ENCODE measurements at regions of chr13 and their contacts with region 1.

Region 1: GRCh38 chr13:30196025-30196424 is 111.3 kb downstream of the KATNAL1 start:
- DNase-seq: no peak
- ATAC-seq: no peak
- H3K4me3 ChIP-seq: no peak overlapping the region
- H3K27ac ChIP-seq: no peak overlapping the region
- H3K4me1 ChIP-seq: peaks cover 34% of the 10 kb centered on the region
- H3K27me3 ChIP-seq: no peaks in the 10 kb centered on the region
- CTCF ChIP-seq: no peak
- EP300 ChIP-seq: no peak
- POLR2A ChIP-seq: no peak
- RAD21 ChIP-seq: no peak

Region 2: DNA sequence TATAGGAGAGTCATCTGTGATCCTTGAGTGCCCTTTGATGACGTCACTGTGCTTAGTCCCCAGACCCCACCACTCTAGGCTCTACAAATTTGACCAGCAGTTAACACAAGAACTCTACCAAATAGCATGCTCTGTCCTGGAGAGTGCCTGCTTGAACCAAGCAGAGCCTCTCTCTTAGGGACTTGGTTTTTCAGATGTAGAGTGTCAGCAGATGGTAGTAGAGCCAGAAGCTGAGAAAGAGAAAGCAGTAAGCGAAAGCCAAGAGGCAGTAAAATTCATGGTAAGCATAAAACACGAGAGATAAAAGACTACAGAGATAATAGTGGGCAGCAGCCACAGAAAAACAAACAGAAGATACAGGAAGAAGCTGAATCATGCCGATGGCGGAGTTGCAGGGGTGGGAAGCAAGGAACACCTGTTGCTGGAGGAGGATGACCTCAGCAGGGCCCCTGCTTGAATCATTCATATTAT is 793.8 kb before region 1 on chr13:
- CTCF ChIA-PET with region 1: no interaction called
- POLR2A ChIA-PET with region 1: no interaction called
- RAD21 ChIA-PET with region 1: no interaction called
- SMC1A ChIA-PET with region 1: no interaction called
- in situ Hi-C with region 1: no loop called
- intact Hi-C with region 1: no loop called
- DNase-seq: no peak
- ATAC-seq: no peak
- H3K4me3 ChIP-seq: no peak overlapping the region
- H3K27ac ChIP-seq: no peak overlapping the region
- H3K4me1 ChIP-seq: no peaks in the 10 kb centered on the region
- H3K27me3 ChIP-seq: no peaks in the 10 kb centered on the region
- CTCF ChIP-seq: no peak
- EP300 ChIP-seq: no peak
- POLR2A ChIP-seq: no peak
- RAD21 ChIP-seq: no peak

Region 3: GRCh38 chr13:30158774-30159445 is 37.1 kb before region 1 on chr13:
- CTCF ChIA-PET with region 1: no interaction called
- POLR2A ChIA-PET with region 1: interaction called, 8 read pairs
- RAD21 ChIA-PET with region 1: interaction called, 13 read pairs
- SMC1A ChIA-PET with region 1: interaction called, 11 read pairs
- in situ Hi-C with region 1: no loop called
- intact Hi-C with region 1: no loop called
- DNase-seq: no peak
- ATAC-seq: peak; percentile 61
- H3K4me3 ChIP-seq: no peak overlapping the region
- H3K27ac ChIP-seq: 0 out of 2 replicates have a peak overlapping the region, but pooled peaks have one; percentile 1
- H3K4me1 ChIP-seq: peaks cover 33% of the 10 kb centered on the region
- H3K27me3 ChIP-seq: no peaks in the 10 kb centered on the region
- CTCF ChIP-seq: peak in 2 of 3 experiments; percentile 33 to 40; a peak in 4 of 6 replicates
- EP300 ChIP-seq: no peak
- POLR2A ChIP-seq: no peak
- RAD21 ChIP-seq: peak; percentile 68

Region 4: DNA sequence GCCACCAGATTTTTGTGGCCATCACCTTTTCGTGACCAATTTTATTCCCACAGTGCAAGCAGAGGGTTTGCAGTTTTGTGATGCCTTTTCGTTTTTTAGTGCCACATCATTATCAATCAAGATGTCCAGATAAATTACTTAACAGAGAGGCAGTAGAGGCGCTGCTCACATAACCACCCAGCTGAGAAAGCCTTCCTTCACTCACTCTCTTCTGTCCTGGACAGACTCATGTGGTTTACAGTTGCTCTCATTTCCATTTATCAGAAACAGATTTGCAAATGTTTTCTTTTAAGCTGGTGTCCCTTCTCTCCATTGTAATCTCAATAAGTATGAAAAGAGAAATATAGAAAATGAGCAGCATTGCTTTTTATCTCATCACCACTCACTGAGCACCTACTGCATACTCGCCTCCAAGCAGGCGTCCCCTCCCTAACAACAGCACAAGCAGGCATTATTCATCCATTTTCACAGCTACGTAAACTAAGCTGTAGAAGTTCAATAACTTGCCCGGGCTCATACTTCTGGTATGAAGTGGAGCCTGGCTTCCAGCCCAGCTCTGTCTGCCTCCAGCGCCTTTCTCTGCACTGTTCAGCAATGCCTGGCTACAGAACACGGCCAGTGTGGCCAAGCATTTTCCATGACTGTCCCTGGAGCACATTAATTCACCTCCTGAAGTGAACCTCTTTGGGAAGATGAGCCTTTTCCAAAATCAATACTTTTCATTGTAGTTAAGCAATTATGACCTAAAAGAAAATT is 146.0 kb after region 1 on chr13:
- CTCF ChIA-PET with region 1: no interaction called
- POLR2A ChIA-PET with region 1: no interaction called
- RAD21 ChIA-PET with region 1: no interaction called
- SMC1A ChIA-PET with region 1: no interaction called
- in situ Hi-C with region 1: no loop called
- intact Hi-C with region 1: no loop called
- DNase-seq: no peak
- ATAC-seq: no peak
- H3K4me3 ChIP-seq: no peak overlapping the region
- H3K27ac ChIP-seq: no peak overlapping the region
- H3K4me1 ChIP-seq: peaks cover 10% of the 10 kb centered on the region
- H3K27me3 ChIP-seq: no peaks in the 10 kb centered on the region
- CTCF ChIP-seq: no peak
- EP300 ChIP-seq: no peak
- POLR2A ChIP-seq: no peak
- RAD21 ChIP-seq: no peak

Measured in GM12878 (cell line).